ENCODE measurements at regions of chr10 and their contacts with region 1.

Region 1: GRCh38 chr10:30413996-30414576 is 19.9 kb upstream of the MAP3K8 start:
- DNase-seq: peak in 1 of 6 donors; percentile 45
- ATAC-seq: peak; percentile 71 to 93 (median 88)
- H3K4me3 ChIP-seq: no peak overlapping the region
- H3K27ac ChIP-seq: no peak overlapping the region
- H3K4me1 ChIP-seq: peaks cover 0 to 8% (median 0%) of the 10 kb centered on the region in 3 donors
- H3K27me3 ChIP-seq: no peaks in the 10 kb centered on the region
- CTCF ChIP-seq: peak; percentile 31 to 68 (median 56)

Region 2: DNA sequence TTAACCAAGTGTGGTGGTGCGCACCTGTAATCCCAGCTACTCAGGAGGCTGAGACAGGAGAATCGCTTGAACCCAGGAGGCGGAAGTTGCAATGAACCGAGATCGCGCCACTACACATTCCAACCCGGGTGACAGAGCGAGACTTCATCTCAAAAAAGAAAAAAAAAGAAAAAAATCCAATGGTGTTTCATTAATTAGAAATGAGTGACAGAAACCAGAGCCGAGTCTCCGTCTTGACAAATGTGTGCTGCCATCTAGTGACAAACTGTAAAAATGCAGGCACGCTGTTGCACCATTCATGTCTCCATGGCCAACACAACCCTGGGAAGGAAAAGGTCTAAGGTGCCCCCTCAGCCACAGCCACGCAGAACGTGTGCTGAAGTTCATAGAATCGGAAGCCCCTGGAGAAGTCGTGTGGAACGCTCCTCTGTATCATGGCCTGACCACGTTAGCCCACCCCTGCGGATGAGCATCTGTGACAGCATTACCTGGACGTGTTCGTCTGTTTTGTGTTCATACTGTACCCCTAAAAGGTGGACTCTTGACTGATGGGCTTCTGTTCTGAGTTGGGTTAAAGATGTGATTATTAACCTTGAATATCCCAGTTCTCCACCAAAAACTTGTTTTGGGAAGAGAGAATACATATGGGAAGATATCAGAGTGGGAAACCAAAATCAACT is 120.5 kb after region 1 on chr10:
- intact Hi-C with region 1: loop called in 2 of 3 experiments (anchors 5 to 10 kb)
- DNase-seq: peak in 5 of 6 donors; percentile 44 to 77 (median 47)
- ATAC-seq: peak; percentile 69 to 89 (median 87)
- H3K4me3 ChIP-seq: no peak overlapping the region
- H3K27ac ChIP-seq: no peak overlapping the region
- H3K4me1 ChIP-seq: peaks cover 0 to 3% (median 0%) of the 10 kb centered on the region in 3 donors
- H3K27me3 ChIP-seq: no peaks in the 10 kb centered on the region
- CTCF ChIP-seq: peak; percentile 83 to 92 (median 88)

Region 3: DNA sequence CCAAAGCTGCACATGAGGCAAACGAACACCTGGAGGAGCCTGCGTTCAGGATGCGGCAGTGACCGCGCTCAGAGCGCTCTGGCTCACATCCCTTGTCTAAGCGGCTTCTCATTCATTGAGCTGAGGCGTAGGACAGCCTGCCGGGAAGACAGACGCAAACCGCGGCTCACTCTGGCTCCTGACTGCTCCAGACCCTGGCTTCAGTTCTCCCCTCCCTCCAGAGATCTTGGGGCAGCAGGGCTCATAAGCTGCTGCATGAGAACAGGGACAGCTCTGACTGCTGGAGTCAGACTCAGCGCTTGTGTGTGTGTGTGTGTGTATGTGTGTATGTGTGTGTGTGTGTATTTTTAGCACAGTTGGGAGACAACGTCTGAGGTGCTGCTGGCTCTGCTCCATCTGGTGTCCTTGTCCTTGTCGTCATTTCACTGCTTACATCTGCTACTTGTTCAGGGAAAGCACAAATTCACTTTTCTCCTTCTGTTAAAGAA is 231.3 kb after region 1 on chr10:
- intact Hi-C with region 1: no loop called
- DNase-seq: no peak
- ATAC-seq: peak in 3 of 4 donors; percentile 62 to 70 (median 65)
- H3K4me3 ChIP-seq: no peak overlapping the region
- H3K27ac ChIP-seq: no peak overlapping the region
- H3K4me1 ChIP-seq: no peaks in the 10 kb centered on the region
- H3K27me3 ChIP-seq: no peaks in the 10 kb centered on the region
- CTCF ChIP-seq: no peak

Region 4: GRCh38 chr10:30818010-30818531 is 404.0 kb after region 1 on chr10:
- intact Hi-C with region 1: no loop called
- DNase-seq: peak in 1 of 6 donors; percentile 56
- ATAC-seq: peak in 3 of 4 donors; percentile 44 to 61 (median 48)
- H3K4me3 ChIP-seq: no peak overlapping the region
- H3K27ac ChIP-seq: no peak overlapping the region
- H3K4me1 ChIP-seq: no peaks in the 10 kb centered on the region
- H3K27me3 ChIP-seq: no peaks in the 10 kb centered on the region
- CTCF ChIP-seq: no peak

Measured in pancreas (tissue), 10 donors.